CD14-positive monocyte (primary cell): ENCODE measurements at regions of chr3 and their contacts with region 1.

Region 1: GRCh38 chr3:46909535-46910442 is 32.3 kb downstream of the PTH1R start:
- DNase-seq: peak; percentile 75 to 87 (median 80)
- H3K4me3 ChIP-seq: no peak overlapping the region
- H3K4me3 Mint-ChIP-seq: peak overlapping the region in 1 of 2 donors; percentile 36
- H3K27ac ChIP-seq: no peak overlapping the region
- H3K27ac Mint-ChIP-seq: no peak overlapping the region
- H3K4me1 ChIP-seq: peaks cover 5 to 12% of the 10 kb centered on the region in 2 donors
- H3K4me1 Mint-ChIP-seq: peaks cover 8% of the 10 kb centered on the region
- H3K27me3 ChIP-seq: peaks cover 0 to 3% of the 10 kb centered on the region in 2 donors
- H3K27me3 Mint-ChIP-seq: peaks cover 0 to 4% (median 2%) of the 10 kb centered on the region in 3 donors
- CTCF ChIP-seq: peak; percentile 87

Region 2: GRCh38 chr3:46646700-46647099 is 263.1 kb before region 1 on chr3:
- intact Hi-C with region 1: no loop called
- DNase-seq: no peak
- H3K4me3 ChIP-seq: no peak overlapping the region
- H3K4me3 Mint-ChIP-seq: no peak overlapping the region
- H3K27ac ChIP-seq: no peak overlapping the region
- H3K27ac Mint-ChIP-seq: no peak overlapping the region
- H3K4me1 ChIP-seq: no peaks in the 10 kb centered on the region
- H3K4me1 Mint-ChIP-seq: no peaks in the 10 kb centered on the region
- H3K27me3 ChIP-seq: no peaks in the 10 kb centered on the region
- H3K27me3 Mint-ChIP-seq: peaks cover 3 to 10% (median 9%) of the 10 kb centered on the region in 3 donors
- CTCF ChIP-seq: no peak

Region 3: GRCh38 chr3:46866720-46867549 is 42.9 kb before region 1 on chr3:
- intact Hi-C with region 1: loop called (anchors 1 to 5 kb)
- DNase-seq: peak; percentile 53 to 69 (median 67)
- H3K4me3 ChIP-seq: no peak overlapping the region
- H3K4me3 Mint-ChIP-seq: no peak overlapping the region
- H3K27ac ChIP-seq: no peak overlapping the region
- H3K27ac Mint-ChIP-seq: no peak overlapping the region
- H3K4me1 ChIP-seq: peaks cover 14 to 16% of the 10 kb centered on the region in 2 donors
- H3K4me1 Mint-ChIP-seq: peaks cover 18% of the 10 kb centered on the region
- H3K27me3 ChIP-seq: no peaks in the 10 kb centered on the region
- H3K27me3 Mint-ChIP-seq: peaks cover 5 to 6% (median 6%) of the 10 kb centered on the region in 3 donors
- CTCF ChIP-seq: peak; percentile 91